Endothelial cell of umbilical vein (primary cell): ENCODE measurements at regions of chr10 and their contacts with region 1.

Region 1: GRCh38 chr10:67697724-67698131 is 1.7 kb upstream of the CTNNA3 start:
- DNase-seq: peak; percentile 80
- H3K4me3 ChIP-seq: no peak overlapping the region
- H3K27ac ChIP-seq: no peak overlapping the region
- H3K4me1 ChIP-seq: peaks cover 3% of the 10 kb centered on the region
- H3K27me3 ChIP-seq: peaks cover 4 to 26% of the 10 kb centered on the region in 2 experiments
- CTCF ChIP-seq: peak; percentile 31 to 51
- POLR2A ChIP-seq: no peak

Region 2: GRCh38 chr10:67575532-67575931 is 122.2 kb before region 1 on chr10:
- CTCF ChIA-PET with region 1: no interaction called
- POLR2A ChIA-PET with region 1: no interaction called
- dilution Hi-C with region 1: no loop called
- intact Hi-C with region 1: no loop called
- DNase-seq: no peak
- H3K4me3 ChIP-seq: no peak overlapping the region
- H3K27ac ChIP-seq: no peak overlapping the region
- H3K4me1 ChIP-seq: no peaks in the 10 kb centered on the region
- H3K27me3 ChIP-seq: no peaks in the 10 kb centered on the region
- CTCF ChIP-seq: no peak
- POLR2A ChIP-seq: no peak

Region 3: DNA sequence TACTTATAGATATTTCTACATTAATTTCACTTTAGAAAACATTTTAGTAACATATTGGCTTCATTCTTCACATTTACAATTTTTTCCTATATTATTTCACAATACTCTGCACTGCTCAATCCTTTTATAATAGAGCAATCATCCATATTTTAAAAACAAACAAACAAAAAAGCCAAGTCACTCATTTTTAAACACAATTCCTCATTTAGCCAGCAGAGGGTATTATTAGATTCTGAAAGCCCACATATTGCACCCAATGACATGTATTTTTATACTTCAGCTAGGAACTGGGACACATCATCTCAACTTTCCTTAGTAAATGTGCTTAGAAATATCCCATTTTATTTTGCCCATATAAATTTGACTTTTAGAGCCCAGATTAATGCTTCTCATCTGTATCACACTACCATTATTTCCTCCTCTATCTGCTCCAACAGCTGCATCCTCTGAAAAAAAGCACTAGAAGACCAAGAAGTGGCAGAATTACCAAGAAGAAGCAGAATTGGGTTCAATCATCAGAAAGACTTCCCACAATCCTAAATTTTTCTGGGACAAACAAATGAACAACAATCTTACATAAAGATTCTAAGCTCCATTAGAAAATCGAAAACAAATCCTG is 31.2 kb before region 1 on chr10:
- CTCF ChIA-PET with region 1: interaction called, 32 read pairs
- POLR2A ChIA-PET with region 1: no interaction called
- dilution Hi-C with region 1: no loop called
- intact Hi-C with region 1: loop called (anchors 2 kb)
- DNase-seq: peak; percentile 61
- H3K4me3 ChIP-seq: no peak overlapping the region
- H3K27ac ChIP-seq: peak overlapping the region; percentile 30
- H3K4me1 ChIP-seq: peaks cover 17% of the 10 kb centered on the region
- H3K27me3 ChIP-seq: no peaks in the 10 kb centered on the region
- CTCF ChIP-seq: peak; percentile 17 to 36
- POLR2A ChIP-seq: no peak

Region 4: GRCh38 chr10:67764012-67764822 is 66.5 kb after region 1 on chr10:
- CTCF ChIA-PET with region 1: interaction called, 16 read pairs
- POLR2A ChIA-PET with region 1: no interaction called
- dilution Hi-C with region 1: no loop called
- intact Hi-C with region 1: no loop called
- DNase-seq: peak; percentile 98
- H3K4me3 ChIP-seq: peak overlapping the region; percentile 90 to 96 (median 92)
- H3K27ac ChIP-seq: peak overlapping the region; percentile 82
- H3K4me1 ChIP-seq: peaks cover 3% of the 10 kb centered on the region
- H3K27me3 ChIP-seq: peaks cover 3 to 5% of the 10 kb centered on the region in 2 experiments
- CTCF ChIP-seq: no peak
- POLR2A ChIP-seq: no peak

Region 5: DNA sequence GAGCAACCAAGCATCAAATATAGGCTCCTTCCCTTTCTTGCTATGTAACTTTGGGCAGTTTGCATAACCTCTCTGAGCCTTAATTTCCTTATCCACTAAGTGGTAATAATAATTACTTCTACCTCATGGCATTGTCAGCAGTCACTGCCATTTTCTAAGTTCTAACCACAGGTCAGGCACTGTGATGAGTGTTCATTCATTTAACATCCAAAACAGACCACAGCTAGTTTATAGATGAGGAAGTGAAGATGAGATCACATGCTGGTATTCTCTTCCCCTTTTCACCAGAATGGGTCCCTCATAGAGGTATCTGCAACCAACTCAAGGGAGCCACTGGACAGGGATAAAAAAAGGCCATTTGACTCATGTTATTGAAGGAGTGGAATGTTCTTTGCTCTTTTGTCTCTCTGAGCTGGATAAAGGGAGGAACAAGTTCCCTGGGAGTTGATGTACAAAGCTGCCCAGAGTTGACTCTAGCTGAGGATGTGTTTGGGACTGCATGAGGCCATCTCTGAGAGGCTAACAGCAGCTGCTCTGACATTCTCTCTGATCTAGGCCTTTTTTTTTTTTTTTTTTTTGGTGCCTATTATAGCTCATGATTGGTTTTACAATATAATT is 75.3 kb after region 1 on chr10:
- CTCF ChIA-PET with region 1: interaction called, 310 read pairs
- POLR2A ChIA-PET with region 1: interaction called, 3 read pairs
- dilution Hi-C with region 1: no loop called
- intact Hi-C with region 1: no loop called
- DNase-seq: no peak
- H3K4me3 ChIP-seq: no peak overlapping the region
- H3K27ac ChIP-seq: no peak overlapping the region
- H3K4me1 ChIP-seq: peaks cover 29% of the 10 kb centered on the region
- H3K27me3 ChIP-seq: no peaks in the 10 kb centered on the region
- CTCF ChIP-seq: no peak
- POLR2A ChIP-seq: no peak

Region 6: DNA sequence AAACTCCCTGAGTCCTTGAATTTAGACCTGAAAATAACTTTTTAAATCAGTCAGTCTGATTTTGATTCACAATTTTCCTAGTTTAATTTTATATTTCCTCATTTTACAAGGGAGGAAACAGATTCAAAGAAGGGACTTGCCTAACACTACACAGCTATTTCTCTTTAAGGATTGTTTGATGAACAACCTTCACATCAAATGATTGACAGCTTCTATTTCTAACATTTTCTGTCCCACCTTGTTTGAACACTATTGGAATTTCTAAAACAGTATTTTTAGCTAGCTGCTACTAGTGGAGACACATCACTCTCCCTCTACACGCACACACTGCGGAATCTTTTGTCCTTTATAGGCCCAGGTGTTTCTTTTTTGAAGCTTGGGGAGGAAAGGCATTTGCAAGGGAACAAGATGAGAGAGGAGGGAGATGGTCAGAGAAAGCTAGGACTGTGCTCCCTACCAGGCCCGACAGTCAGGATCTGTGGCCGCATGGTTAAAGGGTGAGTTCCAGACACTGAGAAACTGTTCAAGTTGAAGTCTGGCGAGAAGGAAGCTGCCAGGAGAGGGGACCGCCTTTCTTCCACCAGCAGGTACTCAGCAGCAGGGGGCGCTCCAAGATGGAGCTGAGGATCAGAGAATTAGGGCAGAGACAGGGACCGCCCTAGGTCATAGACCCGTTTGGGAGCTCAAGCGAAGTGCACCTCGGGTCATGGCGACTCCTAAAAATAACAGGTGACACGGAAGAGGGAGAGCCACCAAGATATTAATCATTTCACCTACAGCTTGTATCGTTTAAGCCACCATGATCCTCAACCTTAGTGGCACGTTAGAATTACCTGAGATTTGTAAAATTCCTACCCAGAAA is 90.5 kb after region 1 on chr10:
- CTCF ChIA-PET with region 1: interaction called, 20 read pairs
- POLR2A ChIA-PET with region 1: no interaction called
- dilution Hi-C with region 1: no loop called
- intact Hi-C with region 1: no loop called
- DNase-seq: peak; percentile 26
- H3K4me3 ChIP-seq: no peak overlapping the region
- H3K27ac ChIP-seq: no peak overlapping the region
- H3K4me1 ChIP-seq: no peaks in the 10 kb centered on the region
- H3K27me3 ChIP-seq: peaks cover 0 to 5% of the 10 kb centered on the region in 2 experiments
- CTCF ChIP-seq: peak; percentile 72 to 77
- POLR2A ChIP-seq: no peak

Region 7: DNA sequence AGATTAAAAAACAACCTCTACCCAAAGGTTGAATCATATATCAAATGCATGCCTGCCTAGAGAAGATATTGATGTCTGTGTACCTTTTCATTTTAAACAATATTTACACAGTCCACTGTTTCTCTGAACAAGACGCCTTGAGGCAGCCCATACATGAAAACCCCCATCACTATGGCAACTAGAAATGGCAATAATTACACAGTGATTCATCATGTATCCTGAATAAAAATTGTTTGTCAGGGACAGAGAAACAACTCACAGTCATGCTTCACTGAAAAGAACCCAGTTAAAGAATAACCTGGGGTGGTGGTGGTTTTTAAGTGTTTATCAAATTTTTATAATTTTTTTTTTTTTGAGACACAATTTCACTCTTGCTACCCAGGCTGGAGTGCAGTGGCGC is 120.6 kb after region 1 on chr10:
- CTCF ChIA-PET with region 1: no interaction called
- POLR2A ChIA-PET with region 1: no interaction called
- dilution Hi-C with region 1: no loop called
- intact Hi-C with region 1: no loop called
- DNase-seq: peak; percentile 78
- H3K4me3 ChIP-seq: no peak overlapping the region
- H3K27ac ChIP-seq: no peak overlapping the region
- H3K4me1 ChIP-seq: no peaks in the 10 kb centered on the region
- H3K27me3 ChIP-seq: peaks cover 0 to 5% of the 10 kb centered on the region in 2 experiments
- CTCF ChIP-seq: no peak
- POLR2A ChIP-seq: no peak

Region 8: GRCh38 chr10:68301790-68302502 is 604.2 kb after region 1 on chr10:
- CTCF ChIA-PET with region 1: interaction called, 11 read pairs
- POLR2A ChIA-PET with region 1: no interaction called
- dilution Hi-C with region 1: no loop called
- intact Hi-C with region 1: no loop called
- DNase-seq: peak; percentile 63
- H3K4me3 ChIP-seq: no peak overlapping the region
- H3K27ac ChIP-seq: no peak overlapping the region
- H3K4me1 ChIP-seq: peaks cover 3% of the 10 kb centered on the region
- H3K27me3 ChIP-seq: no peaks in the 10 kb centered on the region
- CTCF ChIP-seq: peak; percentile 26 to 36
- POLR2A ChIP-seq: no peak